CD14-positive monocyte (primary cell): ENCODE measurements at regions of chr21 and their contacts with region 1.

Region 1: GRCh38 chr21:45167796-45168222 is 93.4 kb downstream of the ADARB1 start:
- DNase-seq: no peak
- H3K4me3 ChIP-seq: no peak overlapping the region
- H3K4me3 Mint-ChIP-seq: peak overlapping the region in 1 of 2 donors; percentile 9
- H3K27ac ChIP-seq: no peak overlapping the region
- H3K27ac Mint-ChIP-seq: no peak overlapping the region
- H3K4me1 ChIP-seq: peaks cover 12 to 19% of the 10 kb centered on the region in 2 donors
- H3K4me1 Mint-ChIP-seq: peaks cover 24% of the 10 kb centered on the region
- H3K27me3 ChIP-seq: no peaks in the 10 kb centered on the region
- H3K27me3 Mint-ChIP-seq: peaks cover 0 to 1% (median 0%) of the 10 kb centered on the region in 3 donors
- CTCF ChIP-seq: no peak

Region 2: GRCh38 chr21:45266518-45267389 is 98.9 kb after region 1 on chr21:
- intact Hi-C with region 1: loop called in 1 of 2 experiments (anchors 10 kb)
- DNase-seq: peak in 1 of 3 donors; percentile 2
- H3K4me3 ChIP-seq: no peak overlapping the region
- H3K4me3 Mint-ChIP-seq: no peak overlapping the region
- H3K27ac ChIP-seq: no peak overlapping the region
- H3K27ac Mint-ChIP-seq: peak overlapping the region in 4 of 7 donors; percentile 18 to 53 (median 41)
- H3K4me1 ChIP-seq: no peaks in the 10 kb centered on the region
- H3K4me1 Mint-ChIP-seq: no peaks in the 10 kb centered on the region
- H3K27me3 ChIP-seq: no peaks in the 10 kb centered on the region
- H3K27me3 Mint-ChIP-seq: no peaks in the 10 kb centered on the region
- CTCF ChIP-seq: no peak